ENCODE measurements at regions of chr14 and their contacts with region 1.

Region 1: DNA sequence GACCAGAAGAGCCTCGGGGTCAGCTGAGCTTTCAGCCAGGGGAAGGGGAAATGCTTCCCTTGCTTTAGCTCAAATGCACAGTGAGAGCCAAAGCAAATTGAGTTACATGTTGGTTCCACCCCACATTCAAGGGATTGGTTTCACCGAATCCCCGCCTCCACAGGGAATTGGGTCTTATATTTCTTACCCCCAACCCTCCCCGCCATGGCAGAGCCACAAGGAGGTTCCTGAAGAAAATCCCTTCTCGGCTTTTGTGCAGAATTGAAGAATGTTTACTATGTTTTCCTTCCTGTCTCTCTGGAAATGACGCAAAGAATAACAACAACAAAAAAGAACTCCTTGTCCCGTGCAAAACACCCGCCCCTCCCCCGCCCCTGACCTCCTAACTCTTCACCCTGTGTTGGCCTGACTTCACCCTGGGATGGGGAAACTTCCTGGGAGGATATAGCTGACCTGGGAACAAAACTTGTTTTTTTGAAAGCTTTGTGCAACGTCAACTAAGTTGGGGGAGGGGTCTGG is 21.9 kb upstream of the CIPC start:
- DNase-seq: no peak
- ATAC-seq: no peak
- H3K4me3 ChIP-seq: no peak overlapping the region
- H3K27ac ChIP-seq: no peak overlapping the region
- H3K4me1 ChIP-seq: peaks cover 6% of the 10 kb centered on the region; the same call in 1 of the 2 replicates
- H3K27me3 ChIP-seq: no peaks in the 10 kb centered on the region
- CTCF ChIP-seq: no peak
- EP300 ChIP-seq: no peak
- POLR2A ChIP-seq: no peak
- RAD21 ChIP-seq: no peak

Region 2: GRCh38 chr14:76687611-76688382 is 388.4 kb before region 1 on chr14:
- CTCF ChIA-PET with region 1: no interaction called
- POLR2A ChIA-PET with region 1: no interaction called
- RAD21 ChIA-PET with region 1: no interaction called
- SMC1A ChIA-PET with region 1: no interaction called
- in situ Hi-C with region 1: no loop called
- intact Hi-C with region 1: no loop called
- DNase-seq: no peak
- ATAC-seq: no peak
- H3K4me3 ChIP-seq: no peak overlapping the region
- H3K27ac ChIP-seq: no peak overlapping the region
- H3K4me1 ChIP-seq: no peaks in the 10 kb centered on the region
- H3K27me3 ChIP-seq: no peaks in the 10 kb centered on the region; a peak in 1 of 4 replicates
- CTCF ChIP-seq: no peak
- EP300 ChIP-seq: no peak
- POLR2A ChIP-seq: no peak
- RAD21 ChIP-seq: no peak

Region 3: GRCh38 chr14:76882651-76883050 is 193.5 kb before region 1 on chr14:
- CTCF ChIA-PET with region 1: interaction called, 848 read pairs
- POLR2A ChIA-PET with region 1: no interaction called
- RAD21 ChIA-PET with region 1: interaction called, 498 read pairs
- SMC1A ChIA-PET with region 1: interaction called, 370 read pairs
- in situ Hi-C with region 1: no loop called
- intact Hi-C with region 1: no loop called
- DNase-seq: no peak
- ATAC-seq: no peak
- H3K4me3 ChIP-seq: no peak overlapping the region
- H3K27ac ChIP-seq: no peak overlapping the region
- H3K4me1 ChIP-seq: no peaks in the 10 kb centered on the region
- H3K27me3 ChIP-seq: peaks cover 2 to 3% of the 10 kb centered on the region in 2 experiments; a peak in 2 of 4 replicates
- CTCF ChIP-seq: no peak
- EP300 ChIP-seq: no peak
- POLR2A ChIP-seq: no peak
- RAD21 ChIP-seq: no peak

Region 4: DNA sequence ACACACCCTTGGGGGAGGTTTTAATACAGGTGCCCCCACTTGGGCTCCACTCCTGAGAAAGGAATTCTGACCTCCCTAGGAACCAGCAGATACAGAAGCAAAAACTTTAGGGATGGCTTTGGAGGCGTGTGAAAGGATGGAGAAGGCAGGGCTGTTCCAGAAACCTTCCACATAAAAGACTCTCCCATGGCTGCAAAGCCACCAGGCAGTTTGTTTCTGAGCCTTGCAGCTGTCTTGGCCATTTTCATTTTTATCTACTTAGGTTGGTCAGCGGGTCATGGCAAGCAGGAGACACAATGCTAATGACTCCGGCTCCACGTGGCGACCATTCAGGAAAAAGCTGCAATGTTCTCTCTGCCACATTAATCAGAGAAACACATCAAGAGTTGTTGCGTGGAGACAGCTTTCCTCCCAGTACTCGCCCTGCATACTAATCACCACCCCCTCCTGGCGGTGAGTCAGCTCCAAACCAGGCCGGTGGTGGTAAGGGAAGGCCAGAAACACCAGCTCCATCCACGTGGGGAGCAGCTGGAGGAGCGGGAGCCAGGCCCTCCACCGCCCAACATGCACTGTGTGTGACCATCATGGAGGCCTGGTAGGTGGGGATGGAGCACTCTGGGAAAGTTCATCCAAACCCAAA is 16.8 kb before region 1 on chr14:
- CTCF ChIA-PET with region 1: interaction called, 124 read pairs
- POLR2A ChIA-PET with region 1: no interaction called
- RAD21 ChIA-PET with region 1: interaction called, 43 read pairs
- SMC1A ChIA-PET with region 1: interaction called, 44 read pairs
- in situ Hi-C with region 1: no loop called
- intact Hi-C with region 1: no loop called
- DNase-seq: no peak
- ATAC-seq: peak; percentile 57
- H3K4me3 ChIP-seq: no peak overlapping the region
- H3K27ac ChIP-seq: no peak overlapping the region
- H3K4me1 ChIP-seq: no peaks in the 10 kb centered on the region
- H3K27me3 ChIP-seq: no peaks in the 10 kb centered on the region
- CTCF ChIP-seq: peak in 2 of 3 experiments; percentile 1 to 18; a peak in 1 of 6 replicates
- EP300 ChIP-seq: no peak
- POLR2A ChIP-seq: no peak
- RAD21 ChIP-seq: peak; percentile 27; the same call in 1 of the 2 replicates

Region 5: GRCh38 chr14:77086017-77086736 is 10.0 kb after region 1 on chr14:
- CTCF ChIA-PET with region 1: interaction called, 719 read pairs
- POLR2A ChIA-PET with region 1: interaction called, 9 read pairs
- RAD21 ChIA-PET with region 1: interaction called, 199 read pairs
- SMC1A ChIA-PET with region 1: interaction called, 214 read pairs
- in situ Hi-C with region 1: no loop called
- intact Hi-C with region 1: no loop called
- DNase-seq: no peak
- ATAC-seq: peak; percentile 82
- H3K4me3 ChIP-seq: no peak overlapping the region
- H3K27ac ChIP-seq: no peak overlapping the region
- H3K4me1 ChIP-seq: peaks cover 21% of the 10 kb centered on the region
- H3K27me3 ChIP-seq: no peaks in the 10 kb centered on the region; a peak in 1 of 4 replicates
- CTCF ChIP-seq: no peak
- EP300 ChIP-seq: no peak
- POLR2A ChIP-seq: no peak
- RAD21 ChIP-seq: no peak

Region 6: DNA sequence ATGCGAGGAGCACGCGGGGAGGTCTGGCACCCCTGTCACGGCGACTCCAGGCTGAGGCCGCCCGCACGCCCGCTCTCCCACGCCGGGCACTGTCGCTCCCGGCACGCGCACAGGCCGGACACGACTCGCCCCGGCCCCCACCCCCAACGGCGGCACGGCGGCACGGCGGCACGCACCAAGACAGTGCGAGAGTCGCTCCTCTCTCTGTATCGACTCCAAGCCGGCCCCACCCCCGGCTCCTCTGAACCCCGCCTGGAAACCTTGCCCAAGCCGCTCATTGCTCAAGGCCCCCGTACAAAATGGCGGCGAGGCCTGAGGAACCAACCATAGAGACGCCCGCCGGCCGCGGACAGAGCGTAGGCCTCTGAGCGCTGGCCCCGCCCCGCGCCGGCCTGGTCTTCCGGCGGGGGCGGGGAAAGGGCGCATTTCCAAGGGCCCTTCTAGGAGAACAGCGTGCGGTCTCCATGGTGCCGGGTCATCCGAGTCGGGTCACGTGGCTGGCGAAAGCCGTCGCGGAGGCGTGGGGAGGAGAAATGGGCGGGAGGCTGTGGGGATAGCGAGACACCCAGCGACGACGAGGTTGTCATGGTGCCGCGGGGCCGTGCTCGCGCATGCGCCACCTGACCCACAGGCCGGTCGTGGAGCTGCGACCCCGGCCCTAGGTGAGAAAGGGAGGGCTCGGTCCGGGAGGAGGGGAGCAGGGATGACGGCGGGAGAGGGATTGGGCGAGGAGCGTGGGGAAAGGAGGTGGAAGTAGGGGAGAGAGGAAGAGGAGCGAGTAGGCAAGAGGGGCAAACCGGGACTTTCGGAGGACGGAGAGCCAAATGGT is 21.7 kb after region 1 on chr14 and contains the start of gene CIPC:
- CTCF ChIA-PET with region 1: interaction called, 719 read pairs
- POLR2A ChIA-PET with region 1: interaction called, 6 read pairs
- RAD21 ChIA-PET with region 1: interaction called, 199 read pairs
- SMC1A ChIA-PET with region 1: interaction called, 214 read pairs
- in situ Hi-C with region 1: no loop called
- intact Hi-C with region 1: loop called (anchors 1 kb)
- DNase-seq: peak; percentile 97
- ATAC-seq: peak; percentile 90
- H3K4me3 ChIP-seq: peak within 1 kb of the TSS; percentile 83
- H3K27ac ChIP-seq: peak within 1 kb of the TSS; percentile 87
- H3K4me1 ChIP-seq: peaks cover 17% of the 10 kb centered on the region
- H3K27me3 ChIP-seq: no peaks in the 10 kb centered on the region
- CTCF ChIP-seq: peak in 1 of 3 experiments; percentile 7; a peak in 1 of 6 replicates
- EP300 ChIP-seq: peak in 1 of 2 experiments; percentile 78; a peak in 2 of 4 replicates
- POLR2A ChIP-seq: peak; percentile 86
- RAD21 ChIP-seq: no peak
- polyA plus RNA-seq, gene CIPC: 5.6 to 6.6 TPM

Region 7: GRCh38 chr14:77124345-77125280 is 48.4 kb after region 1 on chr14:
- CTCF ChIA-PET with region 1: interaction called, 93 read pairs
- POLR2A ChIA-PET with region 1: interaction called, 5 read pairs
- RAD21 ChIA-PET with region 1: interaction called, 39 read pairs
- SMC1A ChIA-PET with region 1: interaction called, 45 read pairs
- in situ Hi-C with region 1: no loop called
- intact Hi-C with region 1: loop called (anchors 1 kb)
- DNase-seq: no peak
- ATAC-seq: peak; percentile 50
- H3K4me3 ChIP-seq: peak overlapping the region; percentile 48; the same call in 1 of the 2 replicates
- H3K27ac ChIP-seq: peak overlapping the region; percentile 4; the same call in 1 of the 2 replicates
- H3K4me1 ChIP-seq: peaks cover 49% of the 10 kb centered on the region
- H3K27me3 ChIP-seq: peaks cover 6 to 7% of the 10 kb centered on the region in 2 experiments; a peak in 2 of 4 replicates
- CTCF ChIP-seq: peak; percentile 33 to 61 (median 52); a peak in 4 of 6 replicates
- EP300 ChIP-seq: no peak
- POLR2A ChIP-seq: peak; percentile 45; the same call in 1 of the 2 replicates
- RAD21 ChIP-seq: peak; percentile 59; the same call in 1 of the 2 replicates